HepG2 (cell line): ENCODE measurements at regions of chr14 and their contacts with region 1.

Region 1: GRCh38 chr14:23727566-23728335 is 91.6 kb downstream of the DHRS2 start:
- DNase-seq: peak; percentile 90
- ATAC-seq: peak; percentile 88
- H3K4me3 ChIP-seq: no peak overlapping the region
- H3K27ac ChIP-seq: no peak overlapping the region
- H3K4me1 ChIP-seq: peaks cover 6% of the 10 kb centered on the region
- H3K27me3 ChIP-seq: no peaks in the 10 kb centered on the region; a peak in 1 of 5 replicates
- CTCF ChIP-seq: peak; percentile 91
- EP300 ChIP-seq: no peak
- POLR2A ChIP-seq: no peak
- RAD21 ChIP-seq: peak; percentile 90

Region 2: GRCh38 chr14:23665375-23666192 is 62.2 kb before region 1 on chr14:
- CTCF ChIA-PET with region 1: interaction called, 17 read pairs
- POLR2A ChIA-PET with region 1: interaction called, 3 read pairs
- in situ Hi-C with region 1: no loop called
- intact Hi-C with region 1: loop called (anchors 1 kb)
- DNase-seq: peak; percentile 85
- ATAC-seq: peak; percentile 87
- H3K4me3 ChIP-seq: no peak overlapping the region
- H3K27ac ChIP-seq: no peak overlapping the region
- H3K4me1 ChIP-seq: peaks cover 17% of the 10 kb centered on the region
- H3K27me3 ChIP-seq: peaks cover 2 to 11% of the 10 kb centered on the region in 2 experiments; a peak in 3 of 5 replicates
- CTCF ChIP-seq: peak; percentile 92
- EP300 ChIP-seq: no peak
- POLR2A ChIP-seq: no peak
- RAD21 ChIP-seq: peak; percentile 89

Region 3: GRCh38 chr14:23910101-23910875 is 182.5 kb after region 1 on chr14:
- CTCF ChIA-PET with region 1: interaction called, 72 read pairs
- POLR2A ChIA-PET with region 1: interaction called, 3 read pairs
- in situ Hi-C with region 1: loop called (anchors 5 kb)
- intact Hi-C with region 1: loop called (anchors 1 kb)
- DNase-seq: peak; percentile 81
- ATAC-seq: peak; percentile 96
- H3K4me3 ChIP-seq: no peak overlapping the region
- H3K27ac ChIP-seq: no peak overlapping the region
- H3K4me1 ChIP-seq: no peaks in the 10 kb centered on the region
- H3K27me3 ChIP-seq: peaks cover 0 to 2% of the 10 kb centered on the region in 2 experiments; a peak in 1 of 5 replicates
- CTCF ChIP-seq: peak; percentile 98
- EP300 ChIP-seq: no peak
- POLR2A ChIP-seq: no peak
- RAD21 ChIP-seq: peak; percentile 97

Region 4: GRCh38 chr14:23929822-23930294 is 202.1 kb after region 1 on chr14:
- CTCF ChIA-PET with region 1: interaction called, 46 read pairs
- POLR2A ChIA-PET with region 1: no interaction called
- in situ Hi-C with region 1: no loop called
- intact Hi-C with region 1: loop called (anchors 1 kb)
- DNase-seq: peak; percentile 87
- ATAC-seq: peak; percentile 94
- H3K4me3 ChIP-seq: no peak overlapping the region
- H3K27ac ChIP-seq: no peak overlapping the region
- H3K4me1 ChIP-seq: peaks cover 11% of the 10 kb centered on the region
- H3K27me3 ChIP-seq: no peaks in the 10 kb centered on the region
- CTCF ChIP-seq: peak; percentile 93
- EP300 ChIP-seq: no peak
- POLR2A ChIP-seq: no peak
- RAD21 ChIP-seq: peak; percentile 87

Region 5: GRCh38 chr14:24036169-24036962 is 308.6 kb after region 1 on chr14:
- CTCF ChIA-PET with region 1: no interaction called
- POLR2A ChIA-PET with region 1: no interaction called
- in situ Hi-C with region 1: no loop called
- intact Hi-C with region 1: loop called (anchors 10 kb)
- DNase-seq: peak; percentile 80
- ATAC-seq: peak; percentile 78
- H3K4me3 ChIP-seq: peak overlapping the region; percentile 31 to 68 (median 62); a peak in 5 of 6 replicates
- H3K27ac ChIP-seq: peak overlapping the region; percentile 57
- H3K4me1 ChIP-seq: peaks cover 43% of the 10 kb centered on the region
- H3K27me3 ChIP-seq: peaks cover 0 to 4% of the 10 kb centered on the region in 2 experiments; a peak in 1 of 5 replicates
- CTCF ChIP-seq: peak; percentile 98
- EP300 ChIP-seq: peak in 1 of 2 experiments; percentile 46; a peak in 1 of 4 replicates
- POLR2A ChIP-seq: peak; percentile 70 to 84
- RAD21 ChIP-seq: peak; percentile 87